Posterior vena cava (tissue), 2 donors: ENCODE measurements at regions of chr11 and their contacts with region 1.

Region 1: GRCh38 chr11:123577081-123577598 is 77.3 kb downstream of the SCN3B start:
- DNase-seq: peak; percentile 91

Region 2: DNA sequence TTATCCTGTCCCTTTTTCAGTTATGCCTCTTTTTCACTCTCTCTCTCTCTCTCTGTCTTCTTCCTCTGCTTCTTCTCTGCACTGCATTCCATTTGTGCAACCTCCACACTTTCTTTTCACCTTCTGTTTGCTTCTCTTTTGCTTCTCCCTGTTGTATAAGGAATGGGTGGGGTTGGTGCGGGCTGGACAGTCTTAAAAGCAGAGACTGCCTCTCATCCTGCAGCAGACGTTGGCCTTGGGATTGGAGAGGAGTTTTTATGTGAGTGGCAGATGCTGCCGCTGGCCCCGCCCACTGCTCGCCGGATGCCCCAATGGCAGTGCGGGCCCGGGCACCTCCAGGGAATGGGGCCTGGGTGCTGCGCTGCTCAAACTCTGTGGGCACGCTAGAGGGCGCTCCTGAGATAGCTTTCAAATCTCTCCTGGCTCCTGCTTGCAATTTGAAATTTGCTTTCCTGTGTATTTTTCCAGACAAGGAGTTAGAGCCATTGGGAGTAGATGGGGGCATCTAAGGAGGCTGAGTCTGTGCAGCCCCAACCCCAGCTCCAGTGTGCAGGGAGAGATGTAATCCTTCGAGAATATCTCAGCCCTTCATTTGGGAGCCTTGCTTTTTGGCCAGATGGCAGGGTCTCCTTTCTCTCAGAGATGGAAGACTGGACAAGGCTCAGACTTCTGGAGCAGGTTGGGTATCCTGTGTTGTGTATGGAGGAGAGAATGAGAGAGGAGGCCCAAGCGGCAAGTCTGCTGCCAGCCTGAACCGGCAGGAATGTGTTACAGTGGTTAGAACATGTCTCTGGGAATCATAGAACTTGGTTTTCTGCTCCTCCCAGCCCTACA is 65.9 kb before region 1 on chr11:
- intact Hi-C with region 1: loop called (anchors 5 to 10 kb)
- DNase-seq: peak; percentile 91